ENCODE measurements at regions of chr3 and their contacts with region 1.

Region 1: DNA sequence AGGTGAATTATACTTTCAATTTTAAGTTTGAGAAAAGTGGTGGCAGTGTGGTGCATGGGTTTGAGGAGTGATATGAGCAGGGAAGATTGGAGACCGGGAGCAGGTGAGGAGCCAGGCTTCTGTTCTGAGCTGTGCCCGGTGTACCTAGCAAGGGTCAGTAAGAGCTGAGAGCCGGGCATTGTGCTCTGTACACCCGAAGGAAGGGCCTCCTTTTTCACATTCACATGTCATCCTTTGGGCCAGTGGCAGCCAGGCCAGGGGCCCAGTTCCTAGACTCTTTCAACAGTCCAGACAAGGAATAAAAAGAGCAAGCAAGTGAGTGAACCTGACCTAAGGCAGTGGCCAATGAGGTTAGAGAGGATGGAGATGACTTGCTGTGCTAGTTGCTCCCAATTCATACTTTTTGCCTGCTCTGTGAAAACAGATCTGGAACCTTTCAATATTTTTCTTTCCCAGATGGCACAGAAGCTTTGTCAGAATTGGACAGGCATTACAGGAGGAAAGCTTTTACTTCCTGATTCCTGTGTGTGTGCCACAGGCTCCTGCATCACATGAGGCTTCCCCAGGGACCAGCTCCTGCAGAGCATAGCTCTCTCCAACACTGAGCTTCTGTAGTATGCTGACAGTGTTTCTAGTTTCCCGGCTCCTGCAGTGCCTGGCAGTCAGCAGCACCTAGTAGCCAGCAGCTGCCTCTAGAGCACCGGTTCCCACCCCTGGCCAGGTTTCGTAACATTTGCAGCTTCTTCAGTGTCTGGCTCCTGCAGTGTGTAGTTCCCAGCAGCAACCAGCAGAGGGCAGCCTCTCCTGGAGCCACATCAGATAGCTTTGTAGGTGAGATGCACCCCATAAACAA is 5.3 kb upstream of the TRA2B start:
- DNase-seq: peak; percentile 69 to 85 (median 72)
- ATAC-seq: peak; percentile 96
- H3K4me3 ChIP-seq: no peak overlapping the region
- H3K27ac ChIP-seq: no peak overlapping the region
- H3K4me1 ChIP-seq: peaks cover 0 to 2% of the 10 kb centered on the region in 2 experiments; a peak in 2 of 5 replicates
- H3K27me3 ChIP-seq: no peaks in the 10 kb centered on the region
- CTCF ChIP-seq: peak; percentile 84 to 97 (median 94)
- EP300 ChIP-seq: no peak
- POLR2A ChIP-seq: no peak
- RAD21 ChIP-seq: peak; percentile 40 to 69

Region 2: DNA sequence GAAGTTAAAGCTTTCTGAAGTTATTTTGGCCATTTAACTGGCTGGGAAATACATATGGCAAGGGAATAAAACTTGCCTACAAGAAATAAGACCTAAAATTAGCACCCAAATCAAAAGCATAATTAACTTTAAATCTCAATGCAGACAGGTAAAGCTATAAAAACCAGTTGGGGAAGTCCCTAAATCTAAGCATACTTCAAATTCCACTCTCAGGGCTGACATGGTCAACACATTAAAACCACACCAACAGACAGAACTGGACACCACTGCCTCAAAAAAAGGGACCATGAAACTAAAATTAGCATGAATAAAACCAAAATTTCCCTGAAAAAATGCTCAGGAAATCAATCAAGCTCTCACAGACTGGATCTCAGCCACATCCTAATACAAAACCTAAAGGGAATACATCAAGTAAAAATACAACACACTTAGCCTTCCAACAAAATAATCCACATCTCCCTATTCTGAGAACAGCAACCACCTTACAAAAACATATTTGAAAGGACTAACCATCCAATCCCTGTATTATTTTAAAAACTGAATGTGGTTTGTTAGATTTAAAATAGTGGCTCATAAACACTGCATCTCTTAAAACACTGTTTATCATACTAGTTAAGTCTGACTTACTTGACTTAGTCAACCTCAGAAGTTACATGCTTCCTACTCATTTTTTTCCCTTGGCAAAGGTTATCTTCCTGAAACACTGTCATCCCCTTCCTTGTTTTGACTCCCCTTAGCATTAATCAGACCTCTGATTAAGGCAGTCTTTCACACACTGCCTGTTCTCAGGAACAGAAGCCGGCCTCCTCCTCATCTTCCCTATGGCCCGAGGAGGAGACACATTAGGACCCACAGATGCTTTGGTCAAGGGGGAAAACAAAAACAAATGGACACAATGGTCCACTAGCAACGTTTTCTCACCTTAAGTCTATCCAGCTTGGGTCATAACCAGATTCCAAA is 13.7 kb before region 1 on chr3:
- CTCF ChIA-PET with region 1: no interaction called
- POLR2A ChIA-PET with region 1: interaction called, 61 read pairs
- in situ Hi-C with region 1: no loop called
- intact Hi-C with region 1: no loop called
- DNase-seq: peak in 2 of 4 experiments; percentile 44 to 55
- ATAC-seq: peak; percentile 36
- H3K4me3 ChIP-seq: no peak overlapping the region
- H3K27ac ChIP-seq: no peak overlapping the region
- H3K4me1 ChIP-seq: peaks cover 3 to 51% of the 10 kb centered on the region in 2 experiments; a peak in 4 of 5 replicates
- H3K27me3 ChIP-seq: no peaks in the 10 kb centered on the region
- CTCF ChIP-seq: no peak
- EP300 ChIP-seq: no peak
- POLR2A ChIP-seq: 0 out of 2 replicates have a peak, but pooled peaks have one; percentile 24
- RAD21 ChIP-seq: no peak

Region 3: GRCh38 chr3:185976977-185977678 is 34.0 kb after region 1 on chr3:
- CTCF ChIA-PET with region 1: no interaction called
- POLR2A ChIA-PET with region 1: interaction called, 3 read pairs
- in situ Hi-C with region 1: no loop called
- intact Hi-C with region 1: loop called (anchors 2 kb)
- DNase-seq: peak; percentile 72 to 83 (median 74)
- ATAC-seq: peak; percentile 97
- H3K4me3 ChIP-seq: no peak overlapping the region
- H3K27ac ChIP-seq: no peak overlapping the region; the same call in 2 of the 3 replicates
- H3K4me1 ChIP-seq: peaks cover 0 to 13% of the 10 kb centered on the region in 2 experiments; a peak in 3 of 5 replicates
- H3K27me3 ChIP-seq: no peaks in the 10 kb centered on the region
- CTCF ChIP-seq: peak; percentile 85 to 97 (median 89)
- EP300 ChIP-seq: peak; percentile 91
- POLR2A ChIP-seq: no peak
- RAD21 ChIP-seq: peak; percentile 58 to 76